Common myeloid progenitor, CD34-positive (primary cell): ENCODE measurements at regions of chr9 and their contacts with region 1.

Region 1: GRCh38 chr9:19198406-19198805 is 32.1 kb upstream of the DENND4C start:
- DNase-seq: no peak
- H3K4me3 ChIP-seq: no peak overlapping the region
- H3K27ac ChIP-seq: no peak overlapping the region
- H3K4me1 ChIP-seq: peaks cover 0 to 11% (median 2%) of the 10 kb centered on the region in 4 experiments
- H3K27me3 ChIP-seq: no peaks in the 10 kb centered on the region

Region 2: DNA sequence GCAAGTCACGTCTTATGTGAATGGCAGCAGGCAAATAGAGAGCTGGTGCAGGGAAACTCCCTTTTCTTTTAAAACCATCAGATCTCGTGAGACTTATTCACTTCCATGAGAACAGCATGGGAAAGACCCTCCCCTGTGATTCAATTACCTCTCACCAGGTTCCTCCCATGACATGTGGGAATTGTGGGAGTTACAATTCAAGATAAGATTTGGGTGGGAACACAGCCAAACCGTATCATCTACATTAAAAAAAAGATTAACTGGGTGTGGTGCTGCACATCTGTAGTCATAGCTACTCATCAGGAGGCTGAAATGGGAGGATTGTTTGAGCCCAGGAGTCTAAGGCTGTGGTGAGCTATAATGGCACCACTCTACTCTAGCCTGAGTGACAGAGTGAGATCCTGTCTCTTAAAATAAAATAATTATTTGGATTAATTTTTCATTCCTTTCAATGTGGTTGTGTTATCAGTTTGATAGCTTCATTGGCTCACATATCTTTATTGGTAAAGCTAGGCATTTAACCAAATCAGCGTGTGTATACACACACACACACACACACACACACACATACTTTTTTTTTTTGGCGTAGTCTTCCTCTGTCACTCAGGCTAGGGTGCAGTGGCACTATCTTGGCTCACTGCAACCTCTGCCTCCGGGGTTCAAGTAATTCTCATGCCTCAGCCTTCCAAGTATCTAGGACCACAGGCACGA is 53.9 kb after region 1 on chr9:
- CTCF ChIA-PET with region 1: no interaction called
- POLR2A ChIA-PET with region 1: interaction called, 11 read pairs
- DNase-seq: no peak
- H3K4me3 ChIP-seq: no peak overlapping the region
- H3K27ac ChIP-seq: no peak overlapping the region
- H3K4me1 ChIP-seq: no peaks in the 10 kb centered on the region
- H3K27me3 ChIP-seq: no peaks in the 10 kb centered on the region